Right ventricle myocardium inferior (tissue), 1 donor: ENCODE measurements at regions of chr1 and their contacts with region 1.

Region 1: GRCh38 chr1:45430490-45430889 is 60.5 kb downstream of the TESK2 start:
- DNase-seq: no peak
- ATAC-seq: no peak

Region 2: DNA sequence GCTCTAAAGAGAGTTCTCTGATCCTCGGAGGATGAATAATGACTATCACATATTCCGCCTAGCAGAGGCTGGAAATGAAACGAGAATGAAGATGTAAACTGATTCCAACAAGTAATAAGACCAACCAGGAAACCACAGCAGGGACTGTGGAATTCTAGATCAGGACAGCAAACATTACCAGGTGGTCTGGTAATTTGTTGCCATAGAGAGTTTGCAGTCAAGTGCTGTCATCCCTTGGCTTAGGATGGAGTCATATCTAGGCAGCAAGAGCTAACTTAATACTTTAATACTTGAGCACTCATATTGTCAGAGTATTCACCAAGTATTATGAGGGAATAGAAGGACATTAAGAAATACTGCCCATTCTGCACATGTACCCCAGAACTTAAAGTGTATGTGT is 45.2 kb before region 1 on chr1:
- intact Hi-C with region 1: loop called (anchors 10 kb)
- DNase-seq: no peak
- ATAC-seq: no peak